CD4-positive, alpha-beta T cell (primary cell): ENCODE measurements at regions of chr7 and their contacts with region 1.

Region 1: GRCh38 chr7:106112117-106112971 is at the start of gene SYPL1:
- DNase-seq: peak; percentile 89 to 98 (median 94)
- ATAC-seq: peak; percentile 84
- H3K4me3 ChIP-seq: peak within 1 kb of the TSS; percentile 73
- H3K4me3 Mint-ChIP-seq: peak within 1 kb of the TSS; percentile 94
- H3K27ac ChIP-seq: peak within 1 kb of the TSS; percentile 81 to 82
- H3K27ac Mint-ChIP-seq: peak within 1 kb of the TSS; percentile 90
- H3K4me1 ChIP-seq: peaks cover 26% of the 10 kb centered on the region
- H3K4me1 Mint-ChIP-seq: peaks cover 78% of the 10 kb centered on the region
- H3K27me3 ChIP-seq: no peaks in the 10 kb centered on the region
- H3K27me3 Mint-ChIP-seq: no peaks in the 10 kb centered on the region
- CTCF ChIP-seq: no peak
- total RNA-seq, gene SYPL1: 51.2 to 53.1 TPM

Region 2: GRCh38 chr7:105531792-105532671 is 580.3 kb before region 1 on chr7 and contains the start of gene RINT1:
- CTCF ChIA-PET with region 1: no interaction called
- POLR2A ChIA-PET with region 1: interaction called, 5 read pairs
- intact Hi-C with region 1: loop called in 1 of 2 experiments (anchors 5 kb)
- DNase-seq: peak; percentile 78 to 94 (median 86)
- ATAC-seq: peak; percentile 88
- H3K4me3 ChIP-seq: peak within 1 kb of the TSS; percentile 82
- H3K4me3 Mint-ChIP-seq: peak within 1 kb of the TSS; percentile 94
- H3K27ac ChIP-seq: peak within 1 kb of the TSS; percentile 85 to 89
- H3K27ac Mint-ChIP-seq: peak within 1 kb of the TSS; percentile 87
- H3K4me1 ChIP-seq: peaks cover 35% of the 10 kb centered on the region
- H3K4me1 Mint-ChIP-seq: peaks cover 44% of the 10 kb centered on the region
- H3K27me3 ChIP-seq: no peaks in the 10 kb centered on the region
- H3K27me3 Mint-ChIP-seq: no peaks in the 10 kb centered on the region
- CTCF ChIP-seq: peak; percentile 71
- total RNA-seq, gene RINT1: 38.0 to 39.5 TPM

Region 3: DNA sequence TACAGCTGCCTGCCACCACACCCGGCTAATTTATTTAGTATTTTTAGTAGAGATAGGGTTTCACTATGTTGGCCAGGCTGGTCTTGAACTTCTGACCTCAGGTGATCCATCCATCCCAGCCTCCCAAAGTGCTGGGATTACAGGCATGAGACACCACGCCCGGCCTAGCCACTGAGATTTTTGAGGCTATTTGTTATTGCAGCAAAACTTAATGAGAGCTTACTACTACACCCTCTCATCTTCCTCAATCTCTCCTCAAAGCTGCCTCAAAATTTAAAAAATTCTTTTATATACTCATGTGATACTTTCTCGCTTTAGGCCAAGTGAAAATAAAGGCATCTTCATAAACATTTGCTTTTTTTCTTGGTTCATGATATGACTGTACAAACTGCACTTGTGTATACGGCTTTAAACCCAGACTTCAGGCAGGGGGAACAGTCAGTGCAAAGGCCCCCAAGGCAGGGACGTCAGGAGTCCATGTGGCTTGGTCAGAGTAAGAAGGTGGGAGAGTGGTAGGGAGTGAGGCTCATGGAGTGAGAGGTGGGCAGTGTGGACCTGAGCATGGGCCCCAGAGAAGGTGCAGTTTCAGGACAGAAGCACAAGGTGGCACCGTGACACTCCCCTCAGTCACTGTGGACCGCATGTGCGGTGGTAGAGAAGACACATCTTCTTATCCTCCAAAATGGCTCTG is 55.7 kb before region 1 on chr7:
- CTCF ChIA-PET with region 1: no interaction called
- POLR2A ChIA-PET with region 1: interaction called, 3 read pairs
- intact Hi-C with region 1: loop called in 1 of 2 experiments (anchors 5 kb)
- DNase-seq: peak; percentile 56 to 86 (median 63)
- ATAC-seq: peak; percentile 99
- H3K4me3 ChIP-seq: no peak overlapping the region
- H3K4me3 Mint-ChIP-seq: no peak overlapping the region
- H3K27ac ChIP-seq: no peak overlapping the region
- H3K27ac Mint-ChIP-seq: no peak overlapping the region
- H3K4me1 ChIP-seq: peaks cover 15% of the 10 kb centered on the region
- H3K4me1 Mint-ChIP-seq: peaks cover 22% of the 10 kb centered on the region
- H3K27me3 ChIP-seq: no peaks in the 10 kb centered on the region
- H3K27me3 Mint-ChIP-seq: no peaks in the 10 kb centered on the region
- CTCF ChIP-seq: peak; percentile 86

Region 4: DNA sequence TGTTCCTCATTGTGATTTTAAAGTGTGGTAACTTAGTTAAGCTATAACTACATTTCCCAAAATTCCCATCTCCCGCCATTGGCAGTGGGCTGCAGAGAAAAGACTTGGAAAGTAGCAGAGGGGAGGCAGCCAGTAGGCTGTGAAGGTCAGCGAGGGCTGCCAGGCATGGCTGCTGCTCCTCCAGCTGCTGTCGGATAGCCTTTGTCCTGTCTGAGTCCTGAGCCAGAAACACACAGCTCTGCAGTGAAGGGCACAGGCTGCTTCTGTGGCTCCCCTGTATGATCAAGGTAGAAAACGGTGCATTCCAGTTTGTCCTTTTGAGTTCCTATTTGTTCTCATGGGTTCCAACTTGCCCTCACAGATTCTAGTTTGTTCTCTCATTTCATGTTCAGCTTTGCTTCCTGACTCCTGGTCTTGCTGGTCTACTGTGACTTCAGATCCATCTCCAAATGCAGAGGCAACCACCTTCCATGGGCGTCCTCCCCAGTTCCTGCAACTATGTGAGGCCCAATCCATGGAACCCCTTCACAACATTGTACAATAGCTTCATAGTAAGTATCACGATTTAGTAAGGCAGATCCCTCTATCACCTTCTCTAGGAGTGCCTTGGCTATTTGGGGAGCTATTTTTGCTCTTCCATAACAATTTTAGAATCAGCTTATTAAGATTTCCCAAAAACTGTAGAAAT is 31.9 kb before region 1 on chr7:
- CTCF ChIA-PET with region 1: no interaction called
- POLR2A ChIA-PET with region 1: interaction called, 12 read pairs
- intact Hi-C with region 1: no loop called
- DNase-seq: no peak
- ATAC-seq: no peak
- H3K4me3 ChIP-seq: no peak overlapping the region
- H3K4me3 Mint-ChIP-seq: no peak overlapping the region
- H3K27ac ChIP-seq: no peak overlapping the region
- H3K27ac Mint-ChIP-seq: no peak overlapping the region
- H3K4me1 ChIP-seq: no peaks in the 10 kb centered on the region
- H3K4me1 Mint-ChIP-seq: peaks cover 36% of the 10 kb centered on the region
- H3K27me3 ChIP-seq: no peaks in the 10 kb centered on the region
- H3K27me3 Mint-ChIP-seq: no peaks in the 10 kb centered on the region
- CTCF ChIP-seq: no peak

Region 5: DNA sequence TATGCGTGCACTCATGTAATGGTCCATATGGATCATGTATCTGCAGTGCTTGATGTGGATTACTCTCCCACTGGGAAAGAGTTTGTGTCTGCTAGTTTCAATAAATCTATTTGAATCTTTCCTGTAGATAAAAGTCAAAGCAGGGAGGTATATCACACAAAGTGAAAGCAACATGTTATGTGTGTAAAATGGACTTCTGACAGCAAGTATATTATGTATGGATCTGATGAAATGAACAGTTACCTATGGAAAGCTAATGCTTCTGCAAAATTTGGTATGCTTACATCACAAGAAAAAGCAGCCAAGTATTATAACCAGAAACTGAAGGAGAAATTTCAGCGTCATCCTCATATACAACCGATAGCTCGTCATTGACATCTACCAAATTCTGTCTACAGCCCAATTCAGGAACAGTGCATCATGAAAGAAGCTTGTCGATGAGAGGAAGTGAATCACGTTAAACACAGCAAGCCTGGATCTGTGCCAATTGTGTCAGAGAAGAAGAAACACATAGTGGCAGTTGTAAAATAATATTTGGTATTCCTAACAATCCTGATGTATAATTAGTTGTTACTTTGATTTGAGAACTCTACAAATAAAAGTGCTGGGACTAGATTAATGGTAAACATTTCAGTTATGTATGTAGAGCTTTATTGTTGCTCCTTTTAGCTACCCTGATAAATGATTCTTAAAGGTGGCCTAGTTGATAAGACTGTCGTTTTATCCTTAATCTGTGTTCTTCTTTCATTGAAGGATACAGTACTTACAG is 14.0 kb after region 1 on chr7:
- CTCF ChIA-PET with region 1: interaction called, 4 read pairs
- POLR2A ChIA-PET with region 1: interaction called, 19 read pairs
- intact Hi-C with region 1: loop called in 1 of 2 experiments (anchors 2 kb)
- DNase-seq: peak in 12 of 14 experiments; percentile 10 to 78 (median 54)
- ATAC-seq: peak; percentile 97
- H3K4me3 ChIP-seq: no peak overlapping the region
- H3K4me3 Mint-ChIP-seq: peak overlapping the region; percentile 65
- H3K27ac ChIP-seq: no peak overlapping the region
- H3K27ac Mint-ChIP-seq: peak overlapping the region; percentile 61
- H3K4me1 ChIP-seq: no peaks in the 10 kb centered on the region
- H3K4me1 Mint-ChIP-seq: peaks cover 15% of the 10 kb centered on the region
- H3K27me3 ChIP-seq: no peaks in the 10 kb centered on the region
- H3K27me3 Mint-ChIP-seq: no peaks in the 10 kb centered on the region
- CTCF ChIP-seq: no peak

Region 6: DNA sequence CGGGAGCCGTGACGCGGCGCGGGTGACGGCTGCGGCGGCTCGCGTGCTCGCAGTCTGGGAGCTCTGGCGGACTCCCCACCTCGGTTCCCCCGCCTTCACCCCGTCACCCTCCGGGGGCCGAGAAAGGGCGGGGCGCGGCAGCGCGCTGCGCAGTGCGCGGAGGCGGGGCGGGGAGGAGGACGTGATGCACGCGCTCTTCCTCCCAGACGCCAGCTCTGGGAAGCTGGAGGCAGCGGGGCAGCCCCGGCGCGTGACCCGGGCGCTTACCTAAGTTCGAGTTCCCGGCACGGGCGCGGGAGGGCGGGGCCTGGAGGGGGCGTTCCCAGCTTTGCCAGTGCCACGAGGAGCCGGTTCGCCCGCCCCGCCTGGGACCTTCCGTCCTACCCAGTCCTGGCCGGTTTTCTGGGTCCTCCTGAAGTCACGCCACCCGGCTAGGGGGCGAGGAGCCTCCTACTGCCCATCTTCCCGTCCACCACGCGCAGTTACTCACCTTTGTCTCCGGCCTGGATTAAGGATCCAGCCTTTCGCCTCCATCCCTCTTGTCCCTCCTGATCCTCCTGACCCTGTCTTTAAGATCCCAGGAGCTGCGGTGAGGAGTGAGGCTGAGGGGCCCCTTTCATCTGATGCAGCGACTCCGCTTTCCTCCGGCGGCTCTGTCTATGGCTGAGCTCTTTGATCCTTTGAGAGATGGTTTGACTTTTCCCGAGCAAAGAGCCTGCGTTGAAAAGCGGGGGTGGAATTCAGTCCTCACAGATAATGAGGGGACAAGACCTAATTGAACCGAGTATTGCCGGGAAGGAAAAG is 172.9 kb after region 1 on chr7:
- CTCF ChIA-PET with region 1: no interaction called
- POLR2A ChIA-PET with region 1: interaction called, 12 read pairs
- intact Hi-C with region 1: loop called (anchors 2 kb)
- DNase-seq: peak; percentile 92 to 100 (median 97)
- ATAC-seq: peak; percentile 88
- H3K4me3 ChIP-seq: peak overlapping the region; percentile 75
- H3K4me3 Mint-ChIP-seq: peak overlapping the region; percentile 99
- H3K27ac ChIP-seq: peak overlapping the region; percentile 84 to 91
- H3K27ac Mint-ChIP-seq: peak overlapping the region; percentile 94
- H3K4me1 ChIP-seq: peaks cover 9% of the 10 kb centered on the region
- H3K4me1 Mint-ChIP-seq: peaks cover 37% of the 10 kb centered on the region
- H3K27me3 ChIP-seq: no peaks in the 10 kb centered on the region
- H3K27me3 Mint-ChIP-seq: no peaks in the 10 kb centered on the region
- CTCF ChIP-seq: no peak